ENCODE measurements at regions of chr9 and their contacts with region 1.

Region 1: DNA sequence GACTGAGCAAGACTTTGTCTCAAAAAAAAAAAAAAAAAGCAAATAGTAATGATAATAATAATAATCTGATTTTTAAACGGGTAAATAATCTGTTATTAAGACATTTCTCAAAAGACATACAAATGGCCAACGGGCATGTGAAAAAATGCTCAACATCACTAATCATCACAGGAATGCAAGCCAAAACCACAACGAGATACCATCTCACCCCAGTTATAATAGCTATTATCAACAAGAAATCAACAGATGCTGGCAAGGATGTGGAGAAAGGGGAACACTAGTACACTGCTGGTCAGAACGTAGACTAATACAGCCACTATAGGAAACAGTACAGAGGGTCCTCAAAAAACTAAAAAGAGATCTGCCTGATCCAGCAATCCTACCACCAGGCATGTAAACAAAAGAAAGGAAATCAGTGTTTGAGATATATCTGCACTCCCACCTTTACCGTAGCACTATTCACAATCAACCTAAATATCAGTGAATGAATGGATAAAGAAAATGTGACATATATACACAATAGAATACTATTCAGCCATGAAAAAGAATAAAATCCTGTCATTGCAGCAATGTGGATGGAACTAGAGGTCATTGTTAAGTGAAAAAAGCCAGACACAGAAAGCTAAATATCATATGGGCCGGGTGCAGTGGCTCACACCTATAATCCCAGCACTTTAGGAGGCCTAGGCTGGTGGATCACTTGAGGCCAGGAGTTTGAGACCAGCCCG is 24.9 kb downstream of the VAV2 start:
- DNase-seq: no peak
- ATAC-seq: no peak
- H3K4me3 ChIP-seq: no peak overlapping the region
- H3K4me3 Mint-ChIP-seq: no peak overlapping the region
- H3K27ac ChIP-seq: no peak overlapping the region
- H3K27ac Mint-ChIP-seq: no peak overlapping the region
- H3K4me1 ChIP-seq: no peaks in the 10 kb centered on the region
- H3K4me1 Mint-ChIP-seq: no peaks in the 10 kb centered on the region
- H3K27me3 ChIP-seq: no peaks in the 10 kb centered on the region
- H3K27me3 Mint-ChIP-seq: no peaks in the 10 kb centered on the region
- CTCF ChIP-seq: no peak

Region 2: DNA sequence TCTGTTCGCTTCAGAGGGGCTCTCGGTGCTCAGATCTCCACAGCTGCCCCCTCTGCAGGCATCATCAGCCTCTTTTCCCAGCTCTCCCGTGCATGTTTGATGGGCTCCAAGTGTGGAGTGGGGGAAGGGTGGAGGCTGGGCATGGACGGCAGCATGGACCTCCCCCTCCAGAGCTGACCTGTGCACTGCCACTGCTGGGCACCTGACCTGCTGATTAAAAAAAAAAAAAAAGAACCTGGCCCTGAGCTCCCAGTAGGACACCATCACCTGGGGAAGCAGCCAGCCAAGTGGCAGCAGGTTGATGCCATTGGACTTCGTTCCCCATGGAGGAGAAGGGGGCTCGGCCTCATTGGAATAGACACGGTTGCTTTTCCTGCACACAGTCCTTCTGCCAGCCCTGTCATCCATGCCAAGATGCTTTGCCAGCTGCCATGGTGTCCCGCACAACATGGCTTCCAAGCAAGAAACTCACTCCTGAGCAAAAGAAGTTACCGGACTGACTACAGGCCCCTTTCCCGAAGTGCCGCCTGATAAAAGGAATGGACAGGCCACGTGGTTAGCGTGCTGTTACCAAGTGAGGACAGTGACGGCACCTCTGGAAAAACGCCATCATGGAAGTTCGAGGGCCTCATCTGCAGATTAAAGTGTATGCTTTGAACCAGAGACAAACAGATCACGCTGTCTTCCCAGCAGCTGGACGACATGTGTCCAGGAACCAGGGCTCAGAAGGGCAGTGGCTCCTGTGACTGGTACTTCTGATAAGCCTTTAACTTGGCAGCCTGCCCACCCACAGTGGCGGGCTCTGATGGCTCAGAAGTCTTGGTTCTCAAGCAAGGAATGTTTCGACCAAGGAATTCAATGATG is 43.4 kb after region 1 on chr9:
- CTCF ChIA-PET with region 1: no interaction called
- POLR2A ChIA-PET with region 1: no interaction called
- intact Hi-C with region 1: no loop called
- DNase-seq: no peak
- ATAC-seq: no peak
- H3K4me3 ChIP-seq: no peak overlapping the region
- H3K4me3 Mint-ChIP-seq: no peak overlapping the region
- H3K27ac ChIP-seq: no peak overlapping the region
- H3K27ac Mint-ChIP-seq: no peak overlapping the region
- H3K4me1 ChIP-seq: no peaks in the 10 kb centered on the region
- H3K4me1 Mint-ChIP-seq: no peaks in the 10 kb centered on the region
- H3K27me3 ChIP-seq: peaks cover 0 to 2% of the 10 kb centered on the region in 2 experiments
- H3K27me3 Mint-ChIP-seq: peaks cover 4% of the 10 kb centered on the region
- CTCF ChIP-seq: no peak

Region 3: GRCh38 chr9:134189470-134190231 is 222.5 kb after region 1 on chr9:
- CTCF ChIA-PET with region 1: no interaction called
- POLR2A ChIA-PET with region 1: no interaction called
- intact Hi-C with region 1: no loop called
- DNase-seq: no peak
- ATAC-seq: no peak
- H3K4me3 ChIP-seq: no peak overlapping the region
- H3K4me3 Mint-ChIP-seq: no peak overlapping the region
- H3K27ac ChIP-seq: no peak overlapping the region
- H3K27ac Mint-ChIP-seq: no peak overlapping the region
- H3K4me1 ChIP-seq: peaks cover 9% of the 10 kb centered on the region
- H3K4me1 Mint-ChIP-seq: peaks cover 14% of the 10 kb centered on the region
- H3K27me3 ChIP-seq: no peaks in the 10 kb centered on the region
- H3K27me3 Mint-ChIP-seq: no peaks in the 10 kb centered on the region
- CTCF ChIP-seq: no peak

Region 4: GRCh38 chr9:134236001-134236421 is 268.8 kb after region 1 on chr9:
- CTCF ChIA-PET with region 1: no interaction called
- POLR2A ChIA-PET with region 1: no interaction called
- intact Hi-C with region 1: loop called in 1 of 2 experiments (anchors 5 kb)
- DNase-seq: peak in 1 of 9 experiments; percentile 1
- ATAC-seq: no peak
- H3K4me3 ChIP-seq: no peak overlapping the region
- H3K4me3 Mint-ChIP-seq: no peak overlapping the region
- H3K27ac ChIP-seq: no peak overlapping the region
- H3K27ac Mint-ChIP-seq: no peak overlapping the region
- H3K4me1 ChIP-seq: no peaks in the 10 kb centered on the region
- H3K4me1 Mint-ChIP-seq: no peaks in the 10 kb centered on the region
- H3K27me3 ChIP-seq: no peaks in the 10 kb centered on the region
- H3K27me3 Mint-ChIP-seq: peaks cover 3% of the 10 kb centered on the region
- CTCF ChIP-seq: no peak